HCT116 (cell line): ENCODE measurements at regions of chr10 and their contacts with region 1.

Region 1: GRCh38 chr10:76504823-76505222 is 1073.4 kb downstream of the LRMDA start:
- DNase-seq: no peak
- ATAC-seq: no peak
- H3K4me3 ChIP-seq: no peak overlapping the region
- H3K27ac ChIP-seq: no peak overlapping the region
- H3K4me1 ChIP-seq: no peaks in the 10 kb centered on the region
- H3K27me3 ChIP-seq: no peaks in the 10 kb centered on the region
- CTCF ChIP-seq: no peak
- POLR2A ChIP-seq: no peak
- RAD21 ChIP-seq: no peak

Region 2: GRCh38 chr10:75959209-75959608 is 545.6 kb before region 1 on chr10:
- CTCF ChIA-PET with region 1: no interaction called
- POLR2A ChIA-PET with region 1: no interaction called
- RAD21 ChIA-PET with region 1: no interaction called
- intact Hi-C with region 1: no loop called
- DNase-seq: peak; percentile 80
- ATAC-seq: peak; percentile 90
- H3K4me3 ChIP-seq: no peak overlapping the region
- H3K27ac ChIP-seq: no peak overlapping the region
- H3K4me1 ChIP-seq: peaks cover 5 to 15% of the 10 kb centered on the region in 2 experiments
- H3K27me3 ChIP-seq: no peaks in the 10 kb centered on the region
- CTCF ChIP-seq: no peak
- POLR2A ChIP-seq: no peak
- RAD21 ChIP-seq: no peak

Region 3: GRCh38 chr10:76149182-76149581 is 355.6 kb before region 1 on chr10:
- CTCF ChIA-PET with region 1: no interaction called
- POLR2A ChIA-PET with region 1: no interaction called
- RAD21 ChIA-PET with region 1: no interaction called
- intact Hi-C with region 1: loop called (anchors 5 kb)
- DNase-seq: no peak
- ATAC-seq: no peak
- H3K4me3 ChIP-seq: no peak overlapping the region
- H3K27ac ChIP-seq: no peak overlapping the region
- H3K4me1 ChIP-seq: no peaks in the 10 kb centered on the region
- H3K27me3 ChIP-seq: peaks cover 4% of the 10 kb centered on the region; the same call in 1 of the 2 replicates
- CTCF ChIP-seq: no peak
- POLR2A ChIP-seq: no peak
- RAD21 ChIP-seq: no peak

Region 4: GRCh38 chr10:76403912-76404311 is 100.9 kb before region 1 on chr10:
- CTCF ChIA-PET with region 1: no interaction called
- POLR2A ChIA-PET with region 1: no interaction called
- RAD21 ChIA-PET with region 1: no interaction called
- intact Hi-C with region 1: no loop called
- DNase-seq: no peak
- ATAC-seq: no peak
- H3K4me3 ChIP-seq: no peak overlapping the region
- H3K27ac ChIP-seq: no peak overlapping the region
- H3K4me1 ChIP-seq: no peaks in the 10 kb centered on the region
- H3K27me3 ChIP-seq: peaks cover 22% of the 10 kb centered on the region; the same call in 1 of the 2 replicates
- CTCF ChIP-seq: no peak
- POLR2A ChIP-seq: no peak
- RAD21 ChIP-seq: no peak

Region 5: DNA sequence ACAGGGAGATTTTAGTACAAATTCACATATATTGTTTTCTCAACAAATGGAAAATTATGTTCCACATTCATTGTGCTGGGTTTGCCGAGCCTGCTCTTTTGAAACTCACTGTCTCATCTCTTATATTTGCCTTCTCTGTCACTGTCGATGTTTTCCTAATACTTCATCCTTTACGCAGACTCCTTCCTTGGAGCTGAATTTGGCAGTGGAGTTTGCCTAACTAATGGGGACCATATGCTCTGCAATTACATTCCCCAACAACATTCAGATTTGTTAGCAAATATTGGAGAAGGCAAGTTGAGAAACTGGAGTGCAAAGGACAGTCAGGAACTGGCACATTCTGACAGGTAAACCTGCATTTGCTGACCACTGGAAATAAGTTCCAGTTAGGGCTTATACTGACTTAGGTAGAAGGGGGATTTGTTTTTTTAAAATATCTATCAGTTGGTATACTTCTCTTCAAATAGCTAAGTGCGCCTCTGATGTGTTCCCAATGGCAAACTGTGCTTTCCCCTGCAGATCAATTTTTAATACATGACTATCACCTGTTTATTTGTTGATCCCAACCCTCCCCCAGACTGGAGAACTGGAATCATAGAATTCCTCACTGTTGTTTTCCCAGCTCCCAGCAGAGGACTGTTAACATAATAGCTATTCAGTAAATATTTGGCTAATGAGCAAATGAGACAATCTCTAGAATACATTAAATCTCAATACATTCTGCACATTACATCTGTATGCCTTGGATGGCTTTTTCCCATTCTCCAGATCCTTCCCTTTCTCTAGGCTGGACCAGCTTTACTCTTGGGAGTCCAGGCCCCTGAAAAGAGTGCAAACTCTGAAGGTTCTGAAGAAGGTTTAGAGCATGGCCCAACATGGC is 363.5 kb after region 1 on chr10:
- CTCF ChIA-PET with region 1: no interaction called
- POLR2A ChIA-PET with region 1: no interaction called
- RAD21 ChIA-PET with region 1: no interaction called
- intact Hi-C with region 1: no loop called
- DNase-seq: no peak
- ATAC-seq: no peak
- H3K4me3 ChIP-seq: no peak overlapping the region
- H3K27ac ChIP-seq: no peak overlapping the region
- H3K4me1 ChIP-seq: no peaks in the 10 kb centered on the region
- H3K27me3 ChIP-seq: 0 out of 2 replicates have a peak, but pooled peaks cover 11% of the 10 kb centered on the region
- CTCF ChIP-seq: no peak
- POLR2A ChIP-seq: no peak
- RAD21 ChIP-seq: no peak